ENCODE measurements at regions of chr11 and their contacts with region 1.

Region 1: DNA sequence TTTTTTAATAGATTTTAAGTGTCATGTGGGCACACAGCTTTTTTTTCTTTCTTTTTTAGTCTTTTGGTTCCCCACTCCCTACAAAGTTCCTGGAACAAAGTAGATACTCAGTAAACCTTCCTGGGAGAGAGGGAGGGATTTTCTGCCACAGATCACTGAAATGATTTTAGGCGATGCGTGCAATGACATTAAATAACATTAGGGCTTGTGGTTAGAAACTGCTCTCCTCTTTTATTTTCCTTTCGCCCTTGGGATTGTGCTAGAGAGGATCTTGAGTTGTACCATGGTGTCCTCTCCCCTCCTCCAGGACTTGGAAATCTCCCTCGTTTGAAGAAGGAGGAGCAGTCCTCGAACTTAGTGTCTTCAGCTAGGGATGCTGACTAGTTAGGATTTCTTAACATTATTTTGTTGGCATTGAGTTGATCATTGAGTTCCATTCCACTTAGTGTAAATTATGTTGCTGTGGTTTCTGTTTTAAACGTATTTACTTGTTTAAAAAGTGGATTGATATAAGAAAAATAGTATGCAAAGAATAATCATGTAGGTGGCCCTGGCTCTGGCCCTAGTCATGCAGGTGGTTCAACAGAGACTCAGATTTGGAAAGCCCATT is 88.4 kb downstream of the TRAF6 start:
- DNase-seq: no peak
- H3K4me3 Mint-ChIP-seq: peak overlapping the region; percentile 31
- H3K27ac Mint-ChIP-seq: peak overlapping the region; percentile 85
- H3K4me1 Mint-ChIP-seq: peaks cover 79% of the 10 kb centered on the region
- H3K27me3 Mint-ChIP-seq: no peaks in the 10 kb centered on the region

Region 2: GRCh38 chr11:35474688-35475087 is 947.0 kb before region 1 on chr11:
- CTCF ChIA-PET with region 1: no interaction called
- POLR2A ChIA-PET with region 1: no interaction called
- intact Hi-C with region 1: no loop called
- DNase-seq: no peak
- H3K4me3 Mint-ChIP-seq: no peak overlapping the region
- H3K27ac Mint-ChIP-seq: no peak overlapping the region
- H3K4me1 Mint-ChIP-seq: no peaks in the 10 kb centered on the region
- H3K27me3 Mint-ChIP-seq: peaks cover 9% of the 10 kb centered on the region

Region 3: DNA sequence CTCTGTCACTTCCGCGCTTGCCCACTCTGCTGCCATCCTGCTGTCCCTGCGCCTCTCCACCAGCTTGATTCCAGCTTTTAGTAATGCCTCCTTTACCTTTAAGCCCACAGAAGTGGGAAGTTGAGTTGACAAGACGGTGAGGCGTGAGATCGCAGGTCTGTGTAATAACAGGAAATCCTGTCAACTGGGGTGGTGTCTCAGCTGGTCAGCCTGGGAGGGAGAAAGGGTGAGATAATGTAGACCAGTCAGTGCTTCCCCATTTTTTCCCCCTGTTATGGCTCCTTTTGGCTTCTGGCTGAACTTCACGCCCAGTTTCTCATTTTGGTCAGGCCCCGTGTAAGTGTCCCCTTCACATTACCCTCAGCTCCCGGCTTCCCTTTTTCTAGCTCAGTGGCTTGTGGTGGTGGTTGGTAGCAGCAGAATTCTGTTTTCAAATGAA is 10.4 kb before region 1 on chr11:
- CTCF ChIA-PET with region 1: interaction called, 6 read pairs
- POLR2A ChIA-PET with region 1: interaction called, 35 read pairs
- intact Hi-C with region 1: loop called (anchors 1 kb)
- DNase-seq: peak; percentile 40
- H3K4me3 Mint-ChIP-seq: peak overlapping the region; percentile 10
- H3K27ac Mint-ChIP-seq: peak overlapping the region; percentile 95
- H3K4me1 Mint-ChIP-seq: peaks cover 67% of the 10 kb centered on the region
- H3K27me3 Mint-ChIP-seq: no peaks in the 10 kb centered on the region